ENCODE measurements at regions of chr17 and their contacts with region 1.

Region 1: DNA sequence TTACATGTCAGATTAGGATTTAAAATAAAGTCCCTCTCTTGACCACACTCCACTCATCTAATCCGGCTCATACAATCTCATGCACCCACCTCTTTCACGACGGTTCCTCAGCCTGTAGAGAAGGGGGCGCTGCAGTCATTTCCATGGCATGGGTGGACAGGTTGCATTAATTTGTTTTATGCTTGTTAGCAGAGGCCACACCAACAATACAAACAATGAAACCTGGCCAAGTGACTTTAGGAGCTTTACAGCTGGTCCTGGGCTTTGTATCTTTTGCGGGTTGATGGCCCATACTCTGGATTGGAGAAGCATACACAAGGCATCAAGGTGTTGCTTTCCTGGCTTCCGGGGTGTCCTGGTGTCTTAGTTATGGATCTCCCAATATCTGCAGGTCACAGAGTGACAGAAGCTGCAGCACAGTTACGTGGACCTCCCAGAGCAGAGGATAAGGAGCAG is 9.7 kb upstream of the SNF8 start:
- ATAC-seq: peak; percentile 45 to 94 (median 74)
- H3K4me3 ChIP-seq: no peak overlapping the region
- H3K27ac ChIP-seq: no peak overlapping the region
- H3K4me1 ChIP-seq: peaks cover 0 to 16% of the 10 kb centered on the region in 2 donors

Region 2: DNA sequence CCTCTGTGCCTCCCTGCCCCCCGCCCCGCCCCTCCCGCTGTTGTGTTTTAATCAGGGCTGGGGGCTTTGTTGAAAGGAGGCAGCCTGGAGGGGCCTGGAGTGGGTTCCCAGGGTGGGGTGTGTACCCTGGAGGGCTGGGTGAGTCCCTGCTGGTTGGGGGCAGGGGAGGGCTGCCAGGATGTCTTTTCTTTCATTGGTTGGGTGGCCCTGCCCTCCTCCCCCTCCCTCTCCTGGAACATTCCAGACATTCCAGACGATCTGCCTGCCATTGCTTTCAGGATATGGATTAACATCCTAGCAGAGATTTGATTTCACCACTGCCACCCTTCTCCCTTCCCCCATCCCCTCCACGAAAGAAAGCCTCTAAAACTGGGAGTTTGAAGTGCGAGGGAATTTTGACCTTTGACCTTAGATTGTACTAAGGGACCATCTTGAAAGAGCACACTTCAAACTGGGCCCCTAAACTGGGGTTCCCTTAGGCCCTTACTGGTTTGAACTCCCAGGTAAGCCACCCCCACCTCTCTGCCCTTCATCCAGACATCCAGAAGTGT is 68.1 kb after region 1 on chr17:
- in situ Hi-C with region 1: loop called in 1 of 9 experiments (anchors 10 kb)
- ATAC-seq: peak; percentile 29 to 93 (median 57)
- H3K4me3 ChIP-seq: no peak overlapping the region
- H3K27ac ChIP-seq: peak overlapping the region in 1 of 2 donors; percentile 17
- H3K4me1 ChIP-seq: peaks cover 15 to 23% of the 10 kb centered on the region in 2 donors